ENCODE measurements at regions of chr19 and their contacts with region 1.

Region 1: GRCh38 chr19:10928525-10929401 is at the starts of genes TIMM29 and YIPF2:
- DNase-seq: peak; percentile 98
- H3K4me3 ChIP-seq: peak within 1 kb of the TSS; percentile 82
- H3K27ac ChIP-seq: peak within 1 kb of the TSS; percentile 29
- H3K4me1 ChIP-seq: peaks cover 21% of the 10 kb centered on the region
- CTCF ChIP-seq: no peak
- total RNA-seq, gene TIMM29: 24.1 and 28.3 TPM in 2 replicates
- total RNA-seq, gene YIPF2: 26.7 and 31.8 TPM in 2 replicates

Region 2: DNA sequence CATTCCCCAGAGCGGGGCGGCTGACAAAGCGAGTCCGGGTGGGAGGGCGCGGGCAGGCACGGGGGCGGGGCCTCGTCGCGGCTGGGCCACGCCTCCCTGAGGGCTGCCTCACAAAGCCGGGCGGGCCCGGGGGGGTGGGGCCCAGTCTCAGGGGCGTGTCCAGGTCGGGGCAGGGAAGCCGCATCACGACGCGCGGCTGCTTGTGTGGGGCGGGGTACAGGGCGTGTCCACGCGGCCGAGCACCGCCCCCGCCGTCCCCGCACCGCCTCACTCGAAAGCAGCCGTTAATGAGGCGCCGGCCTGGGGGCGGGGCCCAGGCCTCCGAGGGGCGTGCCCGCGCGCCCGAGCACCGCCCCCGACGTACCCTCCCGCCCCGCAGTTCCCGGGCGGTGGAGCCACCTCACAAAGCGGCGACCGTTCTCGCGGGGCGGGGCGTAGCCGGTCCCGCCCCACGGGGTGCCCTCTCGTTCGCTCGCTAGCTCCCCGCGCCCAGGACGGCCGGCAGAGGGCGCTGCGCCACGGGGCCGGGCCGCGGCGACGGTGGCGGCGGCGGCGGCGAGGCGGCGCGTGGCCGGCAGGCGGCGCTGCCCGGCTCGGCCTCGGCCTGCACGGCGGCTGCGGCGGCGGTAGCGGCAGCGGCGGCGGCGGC is 57.7 kb before region 1 on chr19 and contains the start of gene CARM1:
- CTCF ChIA-PET with region 1: no interaction called
- POLR2A ChIA-PET with region 1: no interaction called
- intact Hi-C with region 1: loop called (anchors 1 kb)
- DNase-seq: peak; percentile 97
- H3K4me3 ChIP-seq: peak within 1 kb of the TSS; percentile 99
- H3K27ac ChIP-seq: peak within 1 kb of the TSS; percentile 90
- H3K4me1 ChIP-seq: peaks cover 54% of the 10 kb centered on the region
- CTCF ChIP-seq: peak; percentile 52; the same call in 1 of the 2 replicates
- total RNA-seq, gene CARM1: 35.1 and 41.2 TPM in 2 replicates

Measured in OCI-LY7 (cell line).